ENCODE measurements at regions of chr22 and their contacts with region 1.

Region 1: GRCh38 chr22:40418366-40419201 is 48.2 kb downstream of the SGSM3 start:
- DNase-seq: peak; percentile 86
- H3K4me3 ChIP-seq: peak overlapping the region; percentile 14
- H3K27ac ChIP-seq: peak overlapping the region; percentile 98
- H3K4me1 ChIP-seq: peaks cover 79% of the 10 kb centered on the region
- CTCF ChIP-seq: no peak

Region 2: GRCh38 chr22:40376149-40376548 is 42.4 kb before region 1 on chr22:
- CTCF ChIA-PET with region 1: no interaction called
- POLR2A ChIA-PET with region 1: interaction called, 7 read pairs
- intact Hi-C with region 1: loop called (anchors 2 kb)
- DNase-seq: peak; percentile 90
- H3K4me3 ChIP-seq: peak overlapping the region; percentile 58
- H3K27ac ChIP-seq: peak overlapping the region; percentile 97
- H3K4me1 ChIP-seq: peaks cover 71% of the 10 kb centered on the region
- CTCF ChIP-seq: no peak

Region 3: GRCh38 chr22:40808018-40808841 is 389.6 kb after region 1 on chr22:
- CTCF ChIA-PET with region 1: no interaction called
- POLR2A ChIA-PET with region 1: no interaction called
- intact Hi-C with region 1: no loop called
- DNase-seq: no peak
- H3K4me3 ChIP-seq: no peak overlapping the region
- H3K27ac ChIP-seq: no peak overlapping the region
- H3K4me1 ChIP-seq: peaks cover 14% of the 10 kb centered on the region
- CTCF ChIP-seq: no peak